Common myeloid progenitor, CD34-positive (primary cell): ENCODE measurements at regions of chr1 and their contacts with region 1.

Region 1: DNA sequence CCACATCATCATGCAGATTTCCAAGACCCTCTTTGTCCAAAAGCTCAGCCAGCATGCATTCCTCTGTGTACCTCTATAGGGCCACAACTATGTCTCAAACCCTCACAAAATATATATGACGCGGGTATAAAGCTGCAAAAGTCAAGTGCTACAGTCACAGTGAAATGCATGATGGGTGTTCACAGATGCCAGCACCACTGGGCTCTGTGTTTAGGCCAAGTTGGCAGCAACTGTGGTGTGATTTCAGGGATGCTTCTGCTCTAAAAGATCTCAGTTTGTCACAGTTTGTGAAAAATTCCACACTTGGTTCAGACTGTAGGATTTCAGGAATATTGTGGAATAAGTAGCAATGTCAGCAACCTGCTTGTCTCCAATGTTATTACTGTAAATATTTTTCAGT is 23.9 kb upstream of the SELP start:
- DNase-seq: no peak
- H3K4me3 ChIP-seq: no peak overlapping the region
- H3K27ac ChIP-seq: no peak overlapping the region
- H3K4me1 ChIP-seq: peaks cover 0 to 4% (median 2%) of the 10 kb centered on the region in 4 experiments
- H3K27me3 ChIP-seq: no peaks in the 10 kb centered on the region

Region 2: DNA sequence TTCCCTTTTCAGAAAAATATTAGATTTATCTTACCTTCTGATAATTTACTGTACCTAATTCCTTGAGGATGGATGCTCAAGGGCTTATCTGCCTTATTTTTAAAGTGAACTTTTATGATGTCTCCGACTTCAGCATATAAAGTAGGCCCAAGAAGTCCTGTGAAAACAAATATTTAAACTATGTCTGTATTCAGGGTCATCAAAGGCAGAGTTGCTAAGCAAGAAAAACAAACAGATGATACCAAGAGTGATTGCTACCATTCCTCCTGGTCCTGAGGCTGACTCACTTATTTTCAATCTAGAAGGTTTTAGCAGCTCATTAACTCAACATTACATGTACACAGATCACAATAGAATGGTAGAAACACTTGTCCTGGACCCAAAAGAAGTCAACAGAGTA is 81.7 kb before region 1 on chr1:
- CTCF ChIA-PET with region 1: no interaction called
- POLR2A ChIA-PET with region 1: no interaction called
- DNase-seq: no peak
- H3K4me3 ChIP-seq: no peak overlapping the region
- H3K27ac ChIP-seq: no peak overlapping the region
- H3K4me1 ChIP-seq: no peaks in the 10 kb centered on the region
- H3K27me3 ChIP-seq: peaks cover 0 to 5% (median 0%) of the 10 kb centered on the region in 5 experiments

Region 3: GRCh38 chr1:169630006-169630405 is 23.9 kb before region 1 on chr1 and contains the start of gene SELP:
- CTCF ChIA-PET with region 1: interaction called, 10 read pairs
- POLR2A ChIA-PET with region 1: no interaction called
- DNase-seq: peak in 2 of 3 donors; percentile 28 to 57
- H3K4me3 ChIP-seq: peak within 1 kb of the TSS in 2 of 7 experiments; percentile 1 to 45
- H3K27ac ChIP-seq: peak within 1 kb of the TSS in 1 of 2 experiments; percentile 37
- H3K4me1 ChIP-seq: peaks cover 9 to 44% (median 30%) of the 10 kb centered on the region in 4 experiments
- H3K27me3 ChIP-seq: no peaks in the 10 kb centered on the region